A673 (cell line): ENCODE measurements at regions of chrX and their contacts with region 1.

Region 1: GRCh38 chrX:21972721-21973120 is 32.2 kb downstream of the SMS start:
- DNase-seq: peak; percentile 21
- H3K4me3 ChIP-seq: no peak overlapping the region
- H3K27ac ChIP-seq: no peak overlapping the region
- H3K4me1 ChIP-seq: no peaks in the 10 kb centered on the region
- H3K27me3 ChIP-seq: no peaks in the 10 kb centered on the region
- CTCF ChIP-seq: peak; percentile 31; the same call in 1 of the 2 replicates

Region 2: DNA sequence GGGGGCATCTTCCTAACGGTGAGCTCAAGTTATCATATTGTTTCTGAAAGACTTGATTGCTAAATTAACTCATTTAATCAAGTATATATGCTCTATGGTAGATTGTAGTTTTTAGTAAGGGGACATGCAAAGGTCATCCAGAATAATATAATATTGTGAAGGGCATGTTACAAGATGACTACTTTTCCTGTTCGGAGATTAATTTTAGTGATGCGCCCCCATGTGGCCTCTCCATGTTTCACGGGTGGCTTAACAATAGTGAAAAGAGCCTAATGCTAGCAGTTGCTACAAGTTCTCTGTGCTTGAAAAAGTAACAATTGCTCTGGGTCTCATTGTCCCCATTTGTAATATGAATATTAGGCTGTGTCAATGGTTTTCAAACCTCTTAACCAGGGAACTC is 227.0 kb before region 1 on chrX:
- CTCF ChIA-PET with region 1: no interaction called
- POLR2A ChIA-PET with region 1: no interaction called
- intact Hi-C with region 1: loop called (anchors 10 kb)
- DNase-seq: peak; percentile 52
- H3K4me3 ChIP-seq: no peak overlapping the region
- H3K27ac ChIP-seq: no peak overlapping the region
- H3K4me1 ChIP-seq: no peaks in the 10 kb centered on the region
- H3K27me3 ChIP-seq: peaks cover 14% of the 10 kb centered on the region
- CTCF ChIP-seq: peak; percentile 84

Region 3: DNA sequence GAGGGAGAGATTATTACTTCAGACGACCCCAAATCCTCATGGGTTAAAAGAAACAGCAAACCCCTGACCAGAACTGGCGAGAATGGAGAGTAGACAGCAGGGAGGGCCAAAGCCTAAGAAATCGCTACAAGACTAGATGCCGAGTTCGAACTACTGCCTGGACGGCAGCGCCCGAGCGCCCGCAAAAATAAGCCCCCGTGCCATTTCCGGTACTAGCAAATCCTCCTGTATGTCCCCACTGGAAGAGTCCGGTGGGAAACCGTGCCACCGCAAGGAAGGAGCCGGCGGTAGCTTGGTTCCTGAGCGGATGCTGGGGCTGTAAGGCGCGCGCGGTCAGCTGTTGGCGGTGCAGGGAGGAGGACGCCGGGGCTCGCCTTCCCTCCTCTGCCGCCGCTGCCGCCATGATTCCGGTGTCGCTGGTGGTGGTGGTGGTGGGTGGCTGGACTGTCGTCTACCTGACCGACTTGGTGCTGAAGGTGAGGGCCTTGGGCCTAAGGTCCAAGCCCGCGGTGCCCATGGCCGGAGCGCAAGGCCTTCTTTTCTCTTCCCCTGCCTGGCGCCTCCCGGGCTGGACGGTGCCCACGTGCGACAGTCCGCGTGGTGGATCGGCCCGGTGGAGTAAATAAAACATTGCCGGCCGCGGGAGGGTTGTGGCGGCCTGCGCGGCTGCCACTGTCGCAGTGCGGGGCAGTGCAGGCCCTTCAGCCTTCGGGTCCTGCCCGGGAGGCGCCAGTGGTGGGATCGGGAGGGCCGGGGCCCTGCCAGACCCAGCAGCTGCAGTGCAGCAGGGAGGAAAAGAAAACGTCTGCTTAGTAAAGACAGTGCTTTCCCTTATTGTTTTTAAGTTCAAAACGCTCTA is 133.2 kb before region 1 on chrX and contains the start of gene MBTPS2:
- CTCF ChIA-PET with region 1: no interaction called
- POLR2A ChIA-PET with region 1: no interaction called
- intact Hi-C with region 1: loop called (anchors 1 kb)
- DNase-seq: peak; percentile 87
- H3K4me3 ChIP-seq: peak within 1 kb of the TSS; percentile 66
- H3K27ac ChIP-seq: peak within 1 kb of the TSS; percentile 79
- H3K4me1 ChIP-seq: no peaks in the 10 kb centered on the region
- H3K27me3 ChIP-seq: no peaks in the 10 kb centered on the region
- CTCF ChIP-seq: 0 out of 2 replicates have a peak, but pooled peaks have one; percentile 29
- total RNA-seq, gene MBTPS2: 23.2 and 23.9 TPM in 2 replicates

Region 4: DNA sequence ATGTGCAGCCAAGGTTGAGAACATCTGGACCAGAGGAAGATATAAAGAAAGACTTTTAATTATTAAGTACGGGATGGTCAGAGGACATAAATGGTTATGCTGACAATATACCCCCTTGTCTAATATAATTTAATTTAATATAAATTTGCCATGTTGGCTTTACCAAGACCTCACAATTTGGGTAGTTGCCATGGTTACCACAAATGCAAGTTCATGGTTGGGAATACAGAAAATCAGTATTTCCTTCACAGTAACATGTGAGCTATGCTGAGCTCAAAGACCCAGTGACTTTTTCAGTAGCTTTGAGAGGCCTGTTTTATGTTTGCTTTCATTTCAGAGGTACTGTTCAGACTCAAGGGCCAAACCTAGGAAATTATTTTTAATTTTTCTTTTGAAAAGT is 523.0 kb after region 1 on chrX:
- CTCF ChIA-PET with region 1: no interaction called
- POLR2A ChIA-PET with region 1: no interaction called
- intact Hi-C with region 1: no loop called
- DNase-seq: no peak
- H3K4me3 ChIP-seq: no peak overlapping the region
- H3K27ac ChIP-seq: no peak overlapping the region
- H3K4me1 ChIP-seq: no peaks in the 10 kb centered on the region
- H3K27me3 ChIP-seq: no peaks in the 10 kb centered on the region
- CTCF ChIP-seq: no peak